CD8-positive, alpha-beta memory T cell (primary cell): ENCODE measurements at regions of chr1 and their contacts with region 1.

Region 1: DNA sequence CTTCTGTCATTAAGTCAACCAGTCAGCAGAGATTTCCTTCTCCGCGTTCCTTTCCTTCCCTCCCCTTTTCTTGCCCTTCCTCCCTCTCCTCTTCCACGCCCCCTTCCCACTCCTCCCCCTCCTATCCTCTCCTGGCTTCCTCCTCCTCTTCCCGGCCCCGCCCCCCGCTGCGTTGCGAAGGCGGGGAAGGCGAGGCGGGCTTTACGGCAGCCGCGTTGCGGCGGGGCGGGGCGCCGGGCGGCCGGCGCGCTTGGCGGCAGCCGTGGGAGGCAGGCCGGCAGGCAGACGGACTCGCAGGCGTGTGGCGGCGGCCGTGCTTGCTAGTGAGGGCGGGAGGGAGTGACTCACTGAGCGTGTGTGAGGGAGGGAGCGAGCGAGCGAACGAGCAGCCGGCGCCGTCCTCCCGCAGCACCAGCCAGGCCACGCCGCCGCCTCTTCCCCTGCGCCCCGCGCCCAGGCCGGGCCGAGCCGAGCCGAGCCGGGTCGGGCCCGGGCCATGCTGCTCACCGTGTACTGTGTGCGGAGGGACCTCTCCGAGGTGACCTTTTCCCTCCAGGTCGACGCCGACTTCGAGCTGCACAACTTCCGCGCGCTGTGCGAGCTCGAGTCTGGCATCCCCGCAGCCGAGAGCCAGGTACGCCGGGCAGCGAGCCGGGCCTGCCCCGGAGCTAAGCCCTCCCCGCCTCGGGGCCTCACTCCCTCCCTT is at the start of gene DDI2:
- DNase-seq: peak; percentile 92 to 96 (median 93)
- H3K4me3 ChIP-seq: peak within 1 kb of the TSS; percentile 96
- H3K4me3 Mint-ChIP-seq: peak within 1 kb of the TSS; percentile 92 to 97 (median 93)
- H3K27ac ChIP-seq: peak within 1 kb of the TSS; percentile 91
- H3K27ac Mint-ChIP-seq: peak within 1 kb of the TSS; percentile 84 to 98 (median 94)
- H3K4me1 ChIP-seq: peaks cover 46% of the 10 kb centered on the region
- H3K4me1 Mint-ChIP-seq: peaks cover 34 to 48% (median 47%) of the 10 kb centered on the region in 3 donors
- H3K27me3 ChIP-seq: no peaks in the 10 kb centered on the region
- H3K27me3 Mint-ChIP-seq: no peaks in the 10 kb centered on the region
- total RNA-seq, gene DDI2: 47.8 to 50.4 TPM

Region 2: GRCh38 chr1:15578921-15579682 is 38.2 kb before region 1 on chr1:
- CTCF ChIA-PET with region 1: no interaction called
- POLR2A ChIA-PET with region 1: interaction called, 11 read pairs
- DNase-seq: peak in 2 of 5 donors; percentile 46 to 70
- H3K4me3 ChIP-seq: peak overlapping the region; percentile 7
- H3K4me3 Mint-ChIP-seq: peak overlapping the region; percentile 48 to 77 (median 65)
- H3K27ac ChIP-seq: peak overlapping the region; percentile 34
- H3K27ac Mint-ChIP-seq: peak overlapping the region; percentile 82 to 97 (median 92)
- H3K4me1 ChIP-seq: peaks cover 50% of the 10 kb centered on the region
- H3K4me1 Mint-ChIP-seq: peaks cover 29 to 44% (median 39%) of the 10 kb centered on the region in 3 donors
- H3K27me3 ChIP-seq: no peaks in the 10 kb centered on the region
- H3K27me3 Mint-ChIP-seq: no peaks in the 10 kb centered on the region

Region 3: GRCh38 chr1:15603050-15603965 is 14.0 kb before region 1 on chr1:
- CTCF ChIA-PET with region 1: interaction called, 5 read pairs
- POLR2A ChIA-PET with region 1: interaction called, 10 read pairs
- DNase-seq: peak; percentile 85 to 95 (median 89)
- H3K4me3 ChIP-seq: peak overlapping the region; percentile 89
- H3K4me3 Mint-ChIP-seq: peak overlapping the region; percentile 75 to 88 (median 82)
- H3K27ac ChIP-seq: peak overlapping the region; percentile 66
- H3K27ac Mint-ChIP-seq: peak overlapping the region; percentile 58 to 94 (median 88)
- H3K4me1 ChIP-seq: peaks cover 12% of the 10 kb centered on the region
- H3K4me1 Mint-ChIP-seq: peaks cover 8 to 14% (median 11%) of the 10 kb centered on the region in 3 donors
- H3K27me3 ChIP-seq: no peaks in the 10 kb centered on the region
- H3K27me3 Mint-ChIP-seq: peaks cover 6 to 11% of the 10 kb centered on the region in 2 donors

Region 4: GRCh38 chr1:15674386-15675159 is 57.2 kb after region 1 on chr1:
- CTCF ChIA-PET with region 1: no interaction called
- POLR2A ChIA-PET with region 1: no interaction called
- DNase-seq: no peak
- H3K4me3 ChIP-seq: no peak overlapping the region
- H3K4me3 Mint-ChIP-seq: no peak overlapping the region
- H3K27ac ChIP-seq: no peak overlapping the region
- H3K27ac Mint-ChIP-seq: no peak overlapping the region
- H3K4me1 ChIP-seq: no peaks in the 10 kb centered on the region
- H3K4me1 Mint-ChIP-seq: no peaks in the 10 kb centered on the region
- H3K27me3 ChIP-seq: no peaks in the 10 kb centered on the region
- H3K27me3 Mint-ChIP-seq: no peaks in the 10 kb centered on the region